ENCODE measurements at regions of chr9 and their contacts with region 1.

Region 1: DNA sequence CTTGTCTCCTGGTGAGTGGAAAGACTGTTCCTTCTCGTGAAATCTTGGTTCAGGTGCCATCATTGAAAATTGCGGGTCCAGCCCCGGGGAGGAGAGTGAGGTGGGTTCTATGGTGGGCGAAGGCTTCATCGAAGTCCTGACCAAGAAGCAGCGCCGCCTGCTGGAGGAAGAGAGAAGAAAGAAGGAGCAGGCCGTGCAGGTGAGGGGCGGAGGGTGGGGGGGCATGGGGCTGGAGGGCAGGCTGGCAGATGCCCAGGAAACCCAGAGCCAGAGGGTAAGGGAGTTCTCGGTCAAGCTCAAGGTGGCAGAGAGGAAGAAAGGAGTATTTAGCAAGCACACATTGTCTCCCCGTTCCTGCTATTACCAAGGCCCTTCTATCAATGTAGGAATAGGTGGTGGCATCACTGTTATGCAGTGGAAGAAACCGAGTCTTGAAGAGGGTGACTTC is 24.3 kb upstream of the POMT1 start:
- DNase-seq: peak in 1 of 2 experiments; percentile 82
- H3K4me3 ChIP-seq: no peak overlapping the region
- H3K4me1 ChIP-seq: no peaks in the 10 kb centered on the region
- H3K27me3 ChIP-seq: no peaks in the 10 kb centered on the region

Region 2: GRCh38 chr9:130461218-130461630 is 1017.2 kb before region 1 on chr9:
- in situ Hi-C with region 1: no loop called
- DNase-seq: peak; percentile 16 to 83
- H3K4me3 ChIP-seq: no peak overlapping the region
- H3K4me1 ChIP-seq: no peaks in the 10 kb centered on the region
- H3K27me3 ChIP-seq: no peaks in the 10 kb centered on the region

Region 3: GRCh38 chr9:131149688-131150053 is 328.8 kb before region 1 on chr9:
- in situ Hi-C with region 1: loop called (anchors 10 kb)
- DNase-seq: no peak
- H3K4me3 ChIP-seq: no peak overlapping the region
- H3K4me1 ChIP-seq: no peaks in the 10 kb centered on the region
- H3K27me3 ChIP-seq: no peaks in the 10 kb centered on the region

Measured in HAP-1 (cell line).